GM10248 (cell line): ENCODE measurements at regions of chr15 and their contacts with region 1.

Region 1: GRCh38 chr15:74433592-74434262 is at the start of gene SEMA7A:
- DNase-seq: peak; percentile 97
- CTCF ChIP-seq: no peak

Region 2: DNA sequence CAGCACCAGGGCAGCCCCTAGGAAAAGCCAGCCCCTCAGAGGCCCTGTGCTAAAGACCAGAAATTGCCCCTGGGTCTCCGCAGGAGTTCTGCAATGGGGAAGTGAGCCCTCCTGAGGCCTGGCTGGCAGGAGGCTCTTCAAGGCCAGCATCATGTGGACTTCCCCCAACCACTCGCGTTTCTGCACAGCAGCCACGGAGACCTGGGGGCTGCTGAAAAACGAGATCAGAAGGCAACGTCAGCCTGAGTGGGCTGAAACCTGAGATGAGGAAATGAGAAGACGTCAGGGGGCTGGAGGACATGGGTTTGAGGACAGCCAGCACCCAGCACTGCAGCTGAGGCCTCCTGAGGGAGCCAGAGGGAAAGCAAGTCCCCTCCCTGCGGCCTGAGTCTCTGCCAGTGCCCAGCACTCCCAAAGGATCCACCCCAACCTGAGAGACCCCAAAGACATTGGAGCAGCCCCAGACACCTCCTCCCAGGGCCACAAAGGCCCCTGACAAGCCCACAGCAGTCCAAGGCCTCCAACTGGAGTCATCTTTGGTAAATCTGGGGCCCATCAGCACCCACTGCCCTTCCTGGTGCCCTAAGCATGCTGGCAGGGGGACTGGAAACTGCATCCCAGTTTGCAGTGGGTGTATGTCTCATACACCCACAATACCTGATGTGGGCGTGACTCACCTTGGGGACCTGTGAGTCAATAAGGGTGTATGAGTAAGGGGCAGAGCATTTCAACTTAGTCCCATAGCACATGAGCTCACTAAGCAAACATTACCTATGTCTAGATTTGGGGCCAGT is 37.1 kb before region 1 on chr15:
- CTCF ChIA-PET with region 1: interaction called, 160 read pairs
- POLR2A ChIA-PET with region 1: interaction called, 7 read pairs
- DNase-seq: peak; percentile 84
- CTCF ChIP-seq: peak; percentile 25

Region 3: GRCh38 chr15:74420197-74420898 is 13.4 kb before region 1 on chr15:
- CTCF ChIA-PET with region 1: interaction called, 14 read pairs
- POLR2A ChIA-PET with region 1: interaction called, 4 read pairs
- DNase-seq: no peak
- CTCF ChIP-seq: no peak